ENCODE measurements at regions of chr16 and their contacts with region 1.

Region 1: GRCh38 chr16:28846080-28846932 is at the start of gene TUFM:
- DNase-seq: peak; percentile 95 to 98
- H3K4me3 ChIP-seq: peak within 1 kb of the TSS; percentile 87 to 99 (median 98)
- H3K27ac ChIP-seq: peak within 1 kb of the TSS; percentile 70; the same call in 1 of the 2 replicates
- H3K4me1 ChIP-seq: peaks cover 0 to 7% (median 3%) of the 10 kb centered on the region in 4 experiments; a peak in 5 of 7 replicates
- H3K27me3 ChIP-seq: no peaks in the 10 kb centered on the region
- CTCF ChIP-seq: peak; percentile 83 to 93 (median 86)
- EP300 ChIP-seq: peak in 1 of 2 experiments; percentile 88; a peak in 2 of 3 replicates
- POLR2A ChIP-seq: no peak; a peak in 1 of 3 replicates
- RAD21 ChIP-seq: peak; percentile 32 to 36; a peak in 3 of 4 replicates
- total RNA-seq, gene TUFM: 243 and 249 TPM in 2 replicates

Region 2: DNA sequence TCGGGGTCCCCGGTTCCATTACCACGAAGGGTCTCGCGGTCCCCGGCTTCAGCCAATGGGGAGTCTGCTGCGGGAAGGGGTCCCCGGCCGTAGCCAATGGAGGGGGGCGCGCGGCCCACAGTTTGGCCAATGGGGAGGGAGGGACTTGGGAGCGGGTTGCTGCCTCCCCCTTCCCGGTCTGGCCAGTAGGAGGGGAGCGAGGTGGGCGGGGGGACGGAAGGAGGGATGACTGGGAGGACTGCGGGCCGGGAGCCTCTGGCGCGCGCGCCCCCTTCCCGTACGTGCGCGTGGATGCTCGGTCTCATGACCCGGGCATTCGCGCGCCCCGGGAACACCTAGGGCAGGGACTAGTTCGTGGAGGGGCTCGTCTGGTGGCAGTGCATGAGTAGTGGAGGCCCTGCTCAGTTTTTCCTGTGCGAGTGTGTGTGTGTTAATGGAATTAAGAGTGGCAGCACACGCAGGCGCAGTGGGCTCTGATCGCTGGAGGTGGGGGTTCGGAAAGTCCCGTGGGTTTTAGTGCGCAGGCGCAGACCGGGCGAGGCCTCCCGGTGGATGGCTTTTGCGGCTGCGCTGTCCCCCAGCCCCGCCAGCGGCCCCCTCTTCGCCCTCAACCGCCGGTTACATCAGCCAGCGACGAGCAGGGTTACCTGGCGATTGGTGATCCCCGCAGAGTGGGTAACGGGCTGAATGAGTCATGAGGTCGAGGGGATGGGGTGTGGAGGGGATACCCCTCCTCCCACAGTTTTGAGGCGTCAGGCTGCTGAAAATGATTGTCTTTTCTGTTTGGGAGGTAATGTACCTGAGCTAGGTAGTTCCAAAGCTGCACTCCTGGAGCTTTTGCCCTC is 22.2 kb before region 1 on chr16:
- CTCF ChIA-PET with region 1: interaction called, 4 read pairs
- POLR2A ChIA-PET with region 1: interaction called, 756 read pairs
- DNase-seq: peak; percentile 92 to 95
- H3K4me3 ChIP-seq: peak overlapping the region; percentile 88 to 97 (median 92)
- H3K27ac ChIP-seq: peak overlapping the region; percentile 96
- H3K4me1 ChIP-seq: peaks cover 0 to 3% (median under 1%) of the 10 kb centered on the region in 4 experiments; a peak in 3 of 7 replicates
- H3K27me3 ChIP-seq: no peaks in the 10 kb centered on the region
- CTCF ChIP-seq: no peak
- EP300 ChIP-seq: no peak
- POLR2A ChIP-seq: peak; percentile 24 to 82
- RAD21 ChIP-seq: no peak

Region 3: GRCh38 chr16:28835867-28836744 is 10.2 kb before region 1 on chr16:
- CTCF ChIA-PET with region 1: interaction called, 26 read pairs
- POLR2A ChIA-PET with region 1: interaction called, 756 read pairs
- DNase-seq: no peak
- H3K4me3 ChIP-seq: no peak overlapping the region
- H3K27ac ChIP-seq: no peak overlapping the region
- H3K4me1 ChIP-seq: no peaks in the 10 kb centered on the region
- H3K27me3 ChIP-seq: no peaks in the 10 kb centered on the region
- CTCF ChIP-seq: no peak
- EP300 ChIP-seq: no peak
- POLR2A ChIP-seq: peak in 1 of 2 experiments; percentile 39; a peak in 1 of 3 replicates
- RAD21 ChIP-seq: no peak

Region 4: GRCh38 chr16:28999577-28999976 is 153.3 kb after region 1 on chr16:
- CTCF ChIA-PET with region 1: no interaction called
- POLR2A ChIA-PET with region 1: no interaction called
- DNase-seq: no peak
- H3K4me3 ChIP-seq: no peak overlapping the region
- H3K27ac ChIP-seq: no peak overlapping the region
- H3K4me1 ChIP-seq: no peaks in the 10 kb centered on the region
- H3K27me3 ChIP-seq: no peaks in the 10 kb centered on the region
- CTCF ChIP-seq: no peak
- EP300 ChIP-seq: no peak
- POLR2A ChIP-seq: no peak
- RAD21 ChIP-seq: no peak

Measured in H1 (cell line).